ENCODE measurements at regions of chr11 and their contacts with region 1.

Region 1: DNA sequence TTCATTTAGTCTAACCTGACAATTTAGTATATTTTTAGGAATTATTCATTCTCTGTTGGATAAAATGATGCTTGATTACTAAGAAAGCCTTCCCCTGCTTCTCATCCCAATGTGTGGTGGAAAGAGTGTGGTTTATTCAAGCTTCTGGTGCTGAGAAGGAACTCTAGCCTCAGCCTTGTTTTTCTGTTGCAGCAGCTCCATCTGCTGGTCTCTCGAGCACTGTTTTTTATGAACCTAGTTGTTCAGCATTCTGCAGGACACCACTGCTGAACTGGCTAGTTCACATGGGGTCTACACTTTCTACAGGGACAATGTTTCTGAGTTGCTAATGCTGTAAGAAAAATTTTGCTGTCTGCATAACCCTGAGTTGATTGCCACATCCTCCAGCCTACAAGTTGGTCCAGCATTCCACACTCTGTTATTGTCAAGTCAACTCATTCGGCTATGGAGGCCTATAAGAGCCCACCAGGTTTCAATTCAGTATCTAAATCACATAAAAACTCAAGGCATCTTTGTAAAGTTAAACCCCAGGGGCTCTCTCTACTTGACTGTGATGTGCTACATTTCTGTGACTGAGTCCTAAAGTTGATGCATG is 14.3 kb downstream of the OR2AG2 start:
- DNase-seq: peak; percentile 78
- H3K4me3 Mint-ChIP-seq: no peak overlapping the region
- H3K27ac Mint-ChIP-seq: no peak overlapping the region
- H3K4me1 Mint-ChIP-seq: peaks cover 2% of the 10 kb centered on the region
- H3K27me3 Mint-ChIP-seq: no peaks in the 10 kb centered on the region

Region 2: DNA sequence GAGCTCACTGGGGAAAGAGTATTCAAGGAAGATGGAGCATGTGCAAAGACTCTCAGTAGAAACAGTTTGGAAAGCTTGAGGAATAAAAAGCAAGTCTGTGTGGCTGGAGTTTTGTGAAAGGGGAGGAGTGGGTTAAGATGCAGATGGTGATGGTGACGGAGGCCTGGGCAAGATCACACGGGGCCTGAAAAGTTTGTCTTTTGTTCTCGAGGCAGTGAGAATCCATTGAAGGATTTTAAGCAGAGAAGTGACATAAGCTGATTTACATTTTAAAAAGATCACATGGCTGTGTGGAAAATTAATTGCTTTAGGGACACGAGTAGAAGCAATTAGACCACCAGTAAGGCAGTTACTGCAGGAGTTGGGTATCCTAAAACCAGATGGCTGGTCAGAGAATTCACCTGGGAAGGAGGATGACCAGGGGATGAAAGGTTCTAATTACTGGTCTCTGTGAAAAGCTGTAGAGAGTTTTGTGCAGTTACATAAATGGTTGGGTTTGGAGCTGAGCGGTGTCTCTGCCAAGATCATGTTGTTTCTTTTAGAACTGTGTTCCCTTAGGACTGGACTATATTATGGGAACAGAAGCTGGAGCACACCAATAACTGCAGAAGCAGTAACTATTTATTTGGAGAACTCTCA is 161.1 kb before region 1 on chr11:
- CTCF ChIA-PET with region 1: no interaction called
- DNase-seq: no peak
- H3K4me3 Mint-ChIP-seq: no peak overlapping the region
- H3K27ac Mint-ChIP-seq: no peak overlapping the region
- H3K4me1 Mint-ChIP-seq: peaks cover 12% of the 10 kb centered on the region
- H3K27me3 Mint-ChIP-seq: no peaks in the 10 kb centered on the region

Region 3: GRCh38 chr11:6737872-6738466 is 19.5 kb before region 1 on chr11:
- CTCF ChIA-PET with region 1: interaction called, 185 read pairs
- DNase-seq: peak; percentile 77
- H3K4me3 Mint-ChIP-seq: no peak overlapping the region
- H3K27ac Mint-ChIP-seq: peak overlapping the region; percentile 1
- H3K4me1 Mint-ChIP-seq: peaks cover 89% of the 10 kb centered on the region
- H3K27me3 Mint-ChIP-seq: no peaks in the 10 kb centered on the region

Region 4: DNA sequence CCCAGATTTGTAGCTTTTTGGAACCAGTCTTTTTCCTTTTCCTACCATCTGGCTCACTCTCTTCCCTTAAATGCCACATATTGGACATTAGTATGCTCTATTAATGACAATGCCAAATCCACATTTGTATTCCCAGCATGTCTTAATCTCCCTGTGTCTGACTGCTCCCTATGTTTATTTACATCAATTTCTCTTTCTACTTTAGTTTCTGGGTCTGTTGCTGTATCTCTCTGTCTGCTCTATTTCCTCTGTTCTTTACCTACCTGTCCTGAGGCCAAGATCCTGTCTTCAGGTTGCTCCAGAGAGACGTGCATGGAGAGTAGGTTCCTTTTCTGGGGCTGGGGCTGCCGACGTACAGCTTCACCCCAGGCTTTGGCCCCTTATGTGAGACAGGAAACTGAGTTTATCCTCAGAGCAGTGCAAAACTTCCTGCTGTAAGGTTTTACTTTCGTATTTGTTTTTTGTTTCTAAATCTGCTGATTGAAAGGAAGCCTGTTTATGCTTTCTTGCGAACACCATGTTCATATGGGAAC is 11.3 kb before region 1 on chr11:
- CTCF ChIA-PET with region 1: interaction called, 185 read pairs
- DNase-seq: peak; percentile 67
- H3K4me3 Mint-ChIP-seq: no peak overlapping the region
- H3K27ac Mint-ChIP-seq: no peak overlapping the region
- H3K4me1 Mint-ChIP-seq: peaks cover 39% of the 10 kb centered on the region
- H3K27me3 Mint-ChIP-seq: no peaks in the 10 kb centered on the region

Region 5: GRCh38 chr11:6943131-6943530 is 185.7 kb after region 1 on chr11:
- CTCF ChIA-PET with region 1: no interaction called
- DNase-seq: no peak
- H3K4me3 Mint-ChIP-seq: no peak overlapping the region
- H3K27ac Mint-ChIP-seq: no peak overlapping the region
- H3K4me1 Mint-ChIP-seq: no peaks in the 10 kb centered on the region
- H3K27me3 Mint-ChIP-seq: no peaks in the 10 kb centered on the region

Measured in activated naive CD4-positive, alpha-beta T cell treated with anti-CD3 and anti-CD28 coated beads, Interleukin-2, amount 10 ng/mL, durations not matched to agents 7 days and 5 days (primary cell).